ENCODE measurements at regions of chr6 and their contacts with region 1.

Region 1: DNA sequence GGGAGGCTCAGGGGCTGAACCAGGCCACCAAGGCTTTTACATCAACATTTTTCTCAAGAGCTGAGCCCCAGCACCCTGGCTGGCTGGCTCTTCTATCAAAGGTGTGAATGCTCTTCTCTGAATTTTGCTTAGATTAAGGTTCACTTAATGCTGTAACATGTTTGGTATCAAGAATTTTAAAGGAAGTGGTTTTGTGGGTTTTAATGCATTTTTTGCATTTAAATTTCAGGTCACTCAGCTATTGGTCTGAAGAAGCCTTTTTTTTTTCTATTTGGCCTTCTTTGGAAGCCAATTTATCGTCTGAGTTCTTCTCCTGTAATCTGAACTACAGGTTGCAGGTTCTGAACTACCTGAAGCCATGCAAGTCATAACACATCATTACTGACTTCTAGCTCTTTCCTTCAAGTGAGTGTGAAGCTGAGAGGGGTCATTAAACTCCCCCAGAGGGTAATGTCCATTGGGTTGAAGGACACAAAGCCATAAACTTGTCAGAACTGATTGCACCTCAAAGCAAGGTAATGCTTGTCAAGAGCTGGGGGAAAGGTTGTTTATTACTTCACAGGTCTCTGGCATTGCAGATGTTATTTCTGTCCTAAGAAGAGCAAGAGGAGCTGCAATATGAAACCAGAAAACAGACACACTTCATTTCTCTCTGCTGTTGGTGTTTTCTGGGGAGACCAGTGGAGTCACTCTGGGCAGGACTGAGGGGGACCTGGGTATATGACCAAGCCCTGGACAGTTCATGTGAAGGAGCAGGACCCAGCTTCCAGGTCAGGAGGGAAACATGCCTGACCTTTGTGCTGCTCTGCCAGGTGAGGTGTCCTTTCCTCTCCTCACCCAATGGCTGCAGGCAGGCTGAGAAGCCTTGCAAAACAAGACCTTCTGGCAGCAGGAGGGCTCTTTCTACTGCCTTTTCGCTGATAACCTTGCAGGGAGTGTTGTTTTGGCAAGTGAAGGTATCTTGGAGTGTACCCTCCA is 26.1 kb upstream of the NEDD9 start:
- DNase-seq: no peak
- ATAC-seq: peak; percentile 80
- H3K4me3 ChIP-seq: no peak overlapping the region
- H3K27ac ChIP-seq: peak overlapping the region; percentile 35
- H3K4me1 ChIP-seq: peaks cover 45% of the 10 kb centered on the region
- H3K27me3 ChIP-seq: no peaks in the 10 kb centered on the region
- CTCF ChIP-seq: no peak
- EP300 ChIP-seq: peak in 1 of 2 experiments; percentile 4; a peak in 1 of 4 replicates
- POLR2A ChIP-seq: no peak
- RAD21 ChIP-seq: no peak

Region 2: GRCh38 chr6:11241793-11242201 is 16.8 kb before region 1 on chr6:
- CTCF ChIA-PET with region 1: no interaction called
- POLR2A ChIA-PET with region 1: no interaction called
- in situ Hi-C with region 1: no loop called
- intact Hi-C with region 1: loop called (anchors 2 kb)
- DNase-seq: peak; percentile 86
- ATAC-seq: peak; percentile 99
- H3K4me3 ChIP-seq: no peak overlapping the region
- H3K27ac ChIP-seq: no peak overlapping the region
- H3K4me1 ChIP-seq: peaks cover 32% of the 10 kb centered on the region
- H3K27me3 ChIP-seq: no peaks in the 10 kb centered on the region
- CTCF ChIP-seq: peak; percentile 87
- EP300 ChIP-seq: peak in 1 of 2 experiments; percentile 55; a peak in 1 of 4 replicates
- POLR2A ChIP-seq: no peak
- RAD21 ChIP-seq: peak; percentile 98

Region 3: DNA sequence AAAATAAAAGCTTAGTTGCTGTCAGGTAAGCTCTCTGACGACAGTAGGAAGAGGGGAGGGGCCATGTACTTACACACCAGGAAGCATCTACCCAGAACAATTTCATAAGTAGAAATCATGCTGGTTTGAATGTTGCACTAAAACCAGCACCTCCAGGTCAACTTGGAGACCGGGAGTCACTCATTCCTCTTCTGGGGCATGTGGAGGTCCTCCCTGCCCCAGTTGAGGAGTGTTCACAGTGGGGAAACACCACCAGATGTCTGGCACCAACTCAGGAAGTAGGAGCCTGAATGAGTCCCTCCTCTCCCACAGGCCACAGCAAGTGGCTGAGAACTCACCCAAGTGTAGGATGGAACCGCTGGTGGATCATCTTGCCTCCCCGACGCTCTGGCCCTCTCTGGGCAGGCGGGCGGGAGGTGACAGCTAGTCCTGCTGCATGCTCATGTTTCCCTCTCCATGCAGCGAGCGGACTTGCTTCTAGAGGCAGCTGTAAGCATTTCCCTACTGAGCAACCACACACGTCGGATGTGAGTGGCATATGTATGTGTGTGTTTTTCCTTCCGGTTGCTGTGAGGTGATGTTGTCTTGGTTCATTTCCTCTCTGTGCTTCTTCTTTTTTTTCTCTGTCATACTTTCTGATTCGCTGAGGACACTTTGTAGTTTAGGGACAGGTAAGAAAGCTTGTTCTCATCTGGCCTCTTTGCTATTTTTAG is 123.4 kb after region 1 on chr6:
- CTCF ChIA-PET with region 1: no interaction called
- POLR2A ChIA-PET with region 1: no interaction called
- in situ Hi-C with region 1: no loop called
- intact Hi-C with region 1: no loop called
- DNase-seq: no peak
- ATAC-seq: no peak
- H3K4me3 ChIP-seq: no peak overlapping the region
- H3K27ac ChIP-seq: no peak overlapping the region
- H3K4me1 ChIP-seq: peaks cover 20% of the 10 kb centered on the region
- H3K27me3 ChIP-seq: no peaks in the 10 kb centered on the region
- CTCF ChIP-seq: no peak
- EP300 ChIP-seq: no peak
- POLR2A ChIP-seq: no peak
- RAD21 ChIP-seq: no peak